HAP-1 (cell line): ENCODE measurements at regions of chr4 and their contacts with region 1.

Region 1: GRCh38 chr4:163063891-163064290 is 102.8 kb downstream of the NAF1 start:
- DNase-seq: no peak
- H3K4me3 ChIP-seq: no peak overlapping the region
- H3K4me1 ChIP-seq: no peaks in the 10 kb centered on the region
- H3K27me3 ChIP-seq: no peaks in the 10 kb centered on the region

Region 2: GRCh38 chr4:163332500-163333406 is 268.9 kb after region 1 on chr4 and contains the start of gene NPY1R:
- in situ Hi-C with region 1: loop called (anchors 25 kb)
- DNase-seq: peak; percentile 79 to 83
- H3K4me3 ChIP-seq: peak within 1 kb of the TSS; percentile 39
- H3K4me1 ChIP-seq: peaks cover 8% of the 10 kb centered on the region; the same call in 1 of the 2 replicates
- H3K27me3 ChIP-seq: no peaks in the 10 kb centered on the region